ENCODE measurements at regions of chr11 and their contacts with region 1.

Region 1: DNA sequence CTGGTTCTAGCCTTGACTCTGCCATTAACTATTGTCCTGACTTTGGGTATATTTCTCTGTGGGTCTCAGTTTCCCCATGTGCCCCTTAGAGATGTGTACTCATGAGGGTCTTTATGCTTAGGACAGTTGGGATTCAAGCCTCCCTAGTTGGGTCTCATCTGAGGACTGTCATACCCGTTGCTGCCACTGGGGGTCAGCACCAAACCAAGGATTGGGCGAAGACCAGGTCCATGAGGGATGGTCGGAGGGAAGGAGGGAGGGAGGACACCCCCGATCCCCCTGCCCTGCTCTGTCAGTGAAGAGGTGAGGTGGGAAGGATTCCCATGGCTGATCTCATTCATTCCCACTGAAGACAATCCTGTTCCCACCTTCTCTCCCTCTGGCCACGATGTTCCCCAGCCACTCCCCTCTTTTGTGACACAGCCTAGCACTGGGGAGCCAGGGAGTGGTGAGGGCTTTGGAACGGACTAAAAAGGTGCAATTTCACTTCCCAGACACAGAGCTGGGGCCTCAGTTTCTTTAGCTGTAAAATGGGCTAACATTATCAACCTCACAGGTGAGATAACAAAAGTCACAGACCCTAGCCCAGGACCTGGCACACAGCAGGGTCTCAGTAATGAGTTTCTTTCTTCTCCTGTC is 12.4 kb upstream of the KLHL35 start:
- DNase-seq: peak; percentile 69
- H3K4me3 Mint-ChIP-seq: no peak overlapping the region
- H3K27ac Mint-ChIP-seq: no peak overlapping the region
- H3K4me1 Mint-ChIP-seq: no peaks in the 10 kb centered on the region
- H3K27me3 Mint-ChIP-seq: no peaks in the 10 kb centered on the region
- CTCF ChIP-seq: peak; percentile 98

Region 2: DNA sequence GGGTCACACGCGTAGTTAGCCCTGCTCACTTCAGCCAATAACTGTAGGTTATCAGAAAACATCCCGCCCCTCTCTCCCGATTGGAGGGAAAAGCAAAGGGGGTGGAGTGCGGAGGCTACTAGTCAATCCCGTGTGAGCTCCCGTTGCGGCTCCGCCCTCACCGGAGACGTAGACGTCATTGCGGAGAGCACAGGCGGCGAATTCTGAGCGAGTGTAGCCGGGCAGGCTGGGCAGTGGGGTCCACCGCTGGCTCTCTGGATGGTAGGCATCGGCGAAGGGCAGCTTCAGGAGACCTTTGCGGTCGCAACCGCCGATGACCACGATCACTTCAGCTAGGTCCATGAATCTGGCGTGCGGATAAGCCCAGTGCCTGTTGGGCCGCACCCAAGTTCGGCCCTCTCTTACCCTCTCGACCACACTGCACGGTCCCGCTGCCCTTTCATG is 17.1 kb before region 1 on chr11:
- CTCF ChIA-PET with region 1: interaction called, 11 read pairs
- POLR2A ChIA-PET with region 1: no interaction called
- intact Hi-C with region 1: no loop called
- DNase-seq: peak; percentile 90
- H3K4me3 Mint-ChIP-seq: peak overlapping the region; percentile 76
- H3K27ac Mint-ChIP-seq: peak overlapping the region; percentile 73
- H3K4me1 Mint-ChIP-seq: no peaks in the 10 kb centered on the region
- H3K27me3 Mint-ChIP-seq: peaks cover 32% of the 10 kb centered on the region
- CTCF ChIP-seq: no peak

Region 3: GRCh38 chr11:75462117-75462812 is 16.8 kb after region 1 on chr11:
- CTCF ChIA-PET with region 1: interaction called, 11 read pairs
- POLR2A ChIA-PET with region 1: no interaction called
- intact Hi-C with region 1: no loop called
- DNase-seq: no peak
- H3K4me3 Mint-ChIP-seq: no peak overlapping the region
- H3K27ac Mint-ChIP-seq: no peak overlapping the region
- H3K4me1 Mint-ChIP-seq: no peaks in the 10 kb centered on the region
- H3K27me3 Mint-ChIP-seq: no peaks in the 10 kb centered on the region
- CTCF ChIP-seq: no peak

Region 4: DNA sequence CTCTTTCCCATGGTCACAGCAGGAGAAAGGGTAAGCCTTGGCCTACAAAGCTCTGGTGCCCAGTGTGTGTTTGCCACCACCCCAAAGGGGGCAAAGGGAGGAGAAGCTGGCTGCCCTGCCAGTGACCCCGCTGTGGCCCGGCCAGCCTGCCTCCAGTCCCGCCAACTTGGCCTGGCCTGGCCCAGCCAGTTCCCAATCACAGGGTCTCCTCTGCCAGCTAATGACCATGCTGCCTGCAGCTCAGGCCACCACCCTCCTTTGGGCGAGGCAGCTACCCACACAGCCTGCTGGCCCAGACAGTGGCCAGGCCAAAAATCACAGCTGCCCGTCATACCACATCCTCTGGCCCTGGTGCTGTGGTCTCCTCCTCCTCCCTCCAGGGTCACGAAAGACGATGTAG is 75.3 kb after region 1 on chr11:
- CTCF ChIA-PET with region 1: interaction called, 29 read pairs
- POLR2A ChIA-PET with region 1: interaction called, 3 read pairs
- intact Hi-C with region 1: no loop called
- DNase-seq: no peak
- H3K4me3 Mint-ChIP-seq: no peak overlapping the region
- H3K27ac Mint-ChIP-seq: no peak overlapping the region
- H3K4me1 Mint-ChIP-seq: no peaks in the 10 kb centered on the region
- H3K27me3 Mint-ChIP-seq: no peaks in the 10 kb centered on the region
- CTCF ChIP-seq: no peak

Region 5: DNA sequence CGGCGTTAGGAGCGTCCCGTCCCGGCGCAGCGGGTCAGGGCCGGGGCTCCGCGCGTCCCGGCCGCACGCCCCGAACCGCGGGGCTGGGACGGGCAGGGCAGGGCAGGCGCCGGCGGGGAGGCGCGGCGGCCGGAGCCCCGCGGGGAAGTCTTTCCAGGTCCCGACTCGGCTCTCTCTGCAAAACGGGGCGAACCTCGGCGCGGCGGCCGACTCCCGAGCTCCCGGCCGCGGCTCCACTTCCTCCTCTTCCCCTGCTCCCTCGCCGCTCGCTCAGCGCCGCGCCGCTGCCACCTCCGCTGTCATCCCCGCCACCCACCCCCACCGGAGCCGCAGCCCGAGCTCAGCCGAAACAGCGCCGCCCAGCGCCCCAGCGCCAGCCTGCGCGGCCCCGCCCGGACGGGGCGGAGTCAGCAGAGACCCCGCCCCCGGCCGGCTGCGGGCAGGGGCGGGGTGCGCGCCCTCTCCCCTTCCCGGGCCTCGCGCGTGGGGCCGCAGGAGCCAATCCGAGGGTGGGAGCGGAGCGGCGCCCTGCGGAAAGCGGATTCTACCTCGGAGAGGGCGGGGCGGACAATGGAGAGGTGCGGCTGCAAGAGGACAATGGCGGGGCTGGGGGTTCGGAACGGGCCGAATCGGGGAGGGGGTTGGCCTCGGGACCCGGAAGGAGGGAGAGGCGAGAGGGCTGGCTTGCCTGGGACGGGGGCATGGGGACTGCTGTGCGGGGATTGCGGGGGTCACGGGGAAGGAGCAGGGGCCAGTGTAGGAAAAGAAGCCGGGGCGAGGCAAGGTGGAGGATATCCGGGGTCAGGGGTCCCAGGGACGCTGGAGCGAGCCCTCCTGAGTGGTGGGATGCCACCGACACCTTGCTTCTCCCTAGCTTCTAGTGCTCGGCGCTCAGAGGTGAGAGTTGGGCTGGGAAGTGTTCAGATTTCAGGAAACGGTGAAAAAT is 80.4 kb after region 1 on chr11 and contains the start of gene GDPD5:
- CTCF ChIA-PET with region 1: interaction called, 284 read pairs
- POLR2A ChIA-PET with region 1: interaction called, 3 read pairs
- intact Hi-C with region 1: no loop called
- DNase-seq: peak; percentile 70
- H3K4me3 Mint-ChIP-seq: peak within 1 kb of the TSS; percentile 71
- H3K27ac Mint-ChIP-seq: no peak within 1 kb of the TSS
- H3K4me1 Mint-ChIP-seq: no peaks in the 10 kb centered on the region
- H3K27me3 Mint-ChIP-seq: no peaks in the 10 kb centered on the region
- CTCF ChIP-seq: peak; percentile 47
- total RNA-seq, gene GDPD5: 5.6 and 5.7 TPM in 2 replicates

Region 6: GRCh38 chr11:75532200-75533048 is 87.0 kb after region 1 on chr11:
- CTCF ChIA-PET with region 1: interaction called, 284 read pairs
- POLR2A ChIA-PET with region 1: interaction called, 5 read pairs
- intact Hi-C with region 1: loop called (anchors 1 kb)
- DNase-seq: peak; percentile 80
- H3K4me3 Mint-ChIP-seq: no peak overlapping the region
- H3K27ac Mint-ChIP-seq: no peak overlapping the region
- H3K4me1 Mint-ChIP-seq: peaks cover 5% of the 10 kb centered on the region
- H3K27me3 Mint-ChIP-seq: no peaks in the 10 kb centered on the region
- CTCF ChIP-seq: peak; percentile 87

Region 7: GRCh38 chr11:75547580-75548058 is 102.2 kb after region 1 on chr11:
- CTCF ChIA-PET with region 1: interaction called, 10 read pairs
- POLR2A ChIA-PET with region 1: no interaction called
- intact Hi-C with region 1: no loop called
- DNase-seq: peak; percentile 71
- H3K4me3 Mint-ChIP-seq: no peak overlapping the region
- H3K27ac Mint-ChIP-seq: no peak overlapping the region
- H3K4me1 Mint-ChIP-seq: peaks cover 5% of the 10 kb centered on the region
- H3K27me3 Mint-ChIP-seq: no peaks in the 10 kb centered on the region
- CTCF ChIP-seq: peak; percentile 84

Region 8: GRCh38 chr11:75589933-75590332 is 144.5 kb after region 1 on chr11:
- CTCF ChIA-PET with region 1: no interaction called
- POLR2A ChIA-PET with region 1: no interaction called
- intact Hi-C with region 1: no loop called
- DNase-seq: no peak
- H3K4me3 Mint-ChIP-seq: no peak overlapping the region
- H3K27ac Mint-ChIP-seq: no peak overlapping the region
- H3K4me1 Mint-ChIP-seq: peaks cover 6% of the 10 kb centered on the region
- H3K27me3 Mint-ChIP-seq: peaks cover 18% of the 10 kb centered on the region
- CTCF ChIP-seq: no peak